HEK293 (cell line): ENCODE measurements at regions of chr6 and their contacts with region 1.

Region 1: DNA sequence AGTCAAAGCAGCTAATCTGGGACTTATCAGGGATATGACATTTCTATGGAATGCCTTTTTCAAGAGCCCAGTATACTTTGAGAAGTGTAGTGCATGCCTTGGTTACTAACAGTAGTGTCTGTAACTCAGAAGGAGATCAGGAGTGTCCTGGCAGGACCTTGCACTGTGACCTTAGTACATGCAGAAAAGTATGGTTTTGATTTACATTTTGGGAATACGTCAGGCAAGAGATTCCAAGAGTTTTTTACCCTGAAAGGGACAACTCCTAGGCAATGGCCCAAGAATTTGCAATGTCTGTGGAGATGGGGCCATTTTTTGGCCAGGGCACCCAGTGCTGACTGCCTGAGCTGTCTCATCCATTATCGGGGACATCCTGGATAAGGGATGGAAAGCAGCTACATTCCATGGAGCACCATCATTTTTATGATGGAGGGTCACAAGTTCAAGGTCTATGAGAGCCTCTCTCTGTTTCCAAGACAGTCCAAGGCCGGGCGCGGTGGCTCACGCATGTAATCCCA is 80.2 kb downstream of the FAM50B start:
- H3K4me3 ChIP-seq: no peak overlapping the region
- H3K27ac ChIP-seq: no peak overlapping the region
- H3K4me1 ChIP-seq: no peaks in the 10 kb centered on the region
- CTCF ChIP-seq: no peak

Region 2: GRCh38 chr6:3630258-3630835 is 299.0 kb before region 1 on chr6:
- CTCF ChIA-PET with region 1: no interaction called
- POLR2A ChIA-PET with region 1: no interaction called
- H3K4me3 ChIP-seq: no peak overlapping the region
- H3K27ac ChIP-seq: no peak overlapping the region
- H3K4me1 ChIP-seq: no peaks in the 10 kb centered on the region
- CTCF ChIP-seq: no peak

Region 3: GRCh38 chr6:3742426-3743344 is 186.7 kb before region 1 on chr6:
- CTCF ChIA-PET with region 1: interaction called, 60 read pairs
- POLR2A ChIA-PET with region 1: no interaction called
- H3K4me3 ChIP-seq: no peak overlapping the region
- H3K27ac ChIP-seq: no peak overlapping the region
- H3K4me1 ChIP-seq: peaks cover 6% of the 10 kb centered on the region; the same call in 1 of the 2 replicates
- CTCF ChIP-seq: peak; percentile 79

Region 4: DNA sequence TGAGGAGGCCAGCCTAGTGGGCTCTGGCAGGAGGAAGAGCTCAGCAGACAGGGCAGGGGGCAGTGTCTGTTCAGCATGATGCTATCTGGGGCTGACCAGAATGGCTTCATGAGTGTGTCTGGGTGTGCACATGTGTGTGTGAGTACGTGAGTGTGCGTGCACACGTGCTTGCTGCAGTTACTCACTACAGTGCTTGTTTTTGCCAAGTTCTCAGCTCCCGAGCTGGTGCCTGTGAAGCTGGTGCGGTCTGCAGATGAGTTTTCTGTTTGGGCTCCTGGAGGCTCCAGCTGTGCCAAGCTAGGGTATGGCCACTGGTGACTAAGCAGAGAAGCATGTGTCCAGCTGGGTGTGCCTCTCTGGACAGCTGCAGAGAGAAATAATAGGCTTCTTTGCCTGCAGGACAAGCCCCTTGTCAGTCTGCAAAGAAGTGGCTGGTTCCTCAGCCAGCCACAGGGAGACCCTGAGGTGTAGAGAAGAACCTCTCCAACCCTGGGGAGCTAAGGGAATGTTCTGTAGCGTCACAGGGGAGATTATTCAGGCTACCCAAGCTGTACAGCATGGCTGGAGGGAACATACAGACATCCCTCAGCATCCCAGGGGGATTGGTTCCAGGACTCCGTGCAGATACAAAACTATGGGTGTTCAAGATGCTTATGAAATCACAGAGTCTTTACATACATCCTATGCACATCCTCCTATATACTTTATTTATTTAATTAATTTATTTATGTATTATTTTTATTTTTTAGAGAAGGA is 120.4 kb before region 1 on chr6:
- CTCF ChIA-PET with region 1: interaction called, 10 read pairs
- POLR2A ChIA-PET with region 1: no interaction called
- H3K4me3 ChIP-seq: no peak overlapping the region
- H3K27ac ChIP-seq: no peak overlapping the region
- H3K4me1 ChIP-seq: peaks cover 4% of the 10 kb centered on the region; the same call in 1 of the 2 replicates
- CTCF ChIP-seq: no peak

Region 5: GRCh38 chr6:3855866-3856265 is 73.5 kb before region 1 on chr6:
- CTCF ChIA-PET with region 1: interaction called, 68 read pairs
- POLR2A ChIA-PET with region 1: no interaction called
- H3K4me3 ChIP-seq: no peak overlapping the region
- H3K27ac ChIP-seq: no peak overlapping the region
- H3K4me1 ChIP-seq: no peaks in the 10 kb centered on the region
- CTCF ChIP-seq: no peak

Region 6: DNA sequence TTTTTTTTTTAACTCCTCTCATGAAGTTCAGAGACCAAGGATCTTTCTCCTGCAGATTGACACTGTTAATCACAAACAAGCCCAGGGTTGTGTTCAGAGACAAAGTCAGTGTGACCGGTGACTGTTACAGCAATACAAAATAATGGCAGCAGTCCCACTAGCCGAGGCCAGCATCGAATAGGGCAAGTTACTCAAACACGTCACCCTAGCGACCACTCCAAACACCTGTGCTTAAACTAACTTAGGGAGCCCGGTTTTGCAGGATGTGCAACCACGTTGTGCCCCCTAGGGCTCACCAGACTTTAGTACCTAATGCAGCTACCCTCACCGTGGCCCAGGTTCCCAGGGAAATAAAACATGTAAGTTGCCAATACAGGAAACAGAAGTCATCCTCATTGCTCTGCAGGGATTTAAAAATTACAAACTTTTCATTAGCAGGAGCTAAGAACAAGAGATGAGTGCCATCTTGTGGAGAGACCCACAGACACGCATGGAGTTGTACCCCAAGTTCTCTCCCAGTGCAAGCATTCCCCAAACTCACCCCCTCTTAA is 42.1 kb before region 1 on chr6:
- CTCF ChIA-PET with region 1: interaction called, 46 read pairs
- POLR2A ChIA-PET with region 1: no interaction called
- H3K4me3 ChIP-seq: no peak overlapping the region
- H3K27ac ChIP-seq: no peak overlapping the region
- H3K4me1 ChIP-seq: no peaks in the 10 kb centered on the region
- CTCF ChIP-seq: no peak

Region 7: DNA sequence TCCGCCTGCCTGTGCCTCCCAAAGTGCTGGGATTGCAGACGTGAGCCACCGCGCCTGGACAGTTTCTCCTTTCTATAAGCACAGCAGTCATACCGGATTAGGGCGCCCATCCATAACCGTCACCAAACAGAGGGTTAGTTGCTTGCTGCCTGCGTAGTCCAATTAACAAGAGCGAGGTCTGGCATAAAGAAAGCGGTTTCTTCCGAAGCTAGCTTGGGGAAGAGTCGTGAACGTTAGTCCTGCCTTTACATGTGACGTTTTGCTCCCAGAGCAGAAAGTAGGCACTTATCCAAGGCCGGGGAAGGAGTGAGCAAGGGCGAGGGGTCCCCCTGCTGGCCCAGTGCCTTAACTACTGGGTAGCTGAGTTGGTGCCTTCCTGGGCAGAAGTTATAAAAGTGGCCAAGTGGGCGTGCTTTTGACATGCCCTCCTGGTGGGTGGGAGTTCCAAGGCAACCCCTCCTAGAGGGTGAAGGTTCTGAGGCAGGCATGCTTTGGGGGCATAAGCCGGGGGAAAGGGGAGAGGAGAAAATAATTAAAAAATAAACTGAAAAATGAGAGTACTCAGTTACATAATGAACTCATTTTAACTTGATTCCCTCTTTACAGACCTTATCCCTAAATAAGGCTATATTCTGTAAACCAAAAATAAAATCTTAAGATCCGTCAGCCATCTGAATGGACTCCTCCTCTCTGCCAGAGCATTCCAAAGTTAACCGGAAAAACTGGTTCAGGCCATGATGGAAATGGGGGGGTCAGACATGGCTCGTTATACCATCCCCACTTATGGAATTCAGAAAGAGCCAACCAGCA is 61.6 kb after region 1 on chr6:
- CTCF ChIA-PET with region 1: interaction called, 13 read pairs
- POLR2A ChIA-PET with region 1: no interaction called
- H3K4me3 ChIP-seq: no peak overlapping the region
- H3K27ac ChIP-seq: no peak overlapping the region; the same call in 1 of the 2 replicates
- H3K4me1 ChIP-seq: no peaks in the 10 kb centered on the region
- CTCF ChIP-seq: peak; percentile 94